Activated B cell treated with CpG ODN at 0.5 μM for 24 hours (primary cell): ENCODE measurements at regions of chr5 and their contacts with region 1.

Region 1: DNA sequence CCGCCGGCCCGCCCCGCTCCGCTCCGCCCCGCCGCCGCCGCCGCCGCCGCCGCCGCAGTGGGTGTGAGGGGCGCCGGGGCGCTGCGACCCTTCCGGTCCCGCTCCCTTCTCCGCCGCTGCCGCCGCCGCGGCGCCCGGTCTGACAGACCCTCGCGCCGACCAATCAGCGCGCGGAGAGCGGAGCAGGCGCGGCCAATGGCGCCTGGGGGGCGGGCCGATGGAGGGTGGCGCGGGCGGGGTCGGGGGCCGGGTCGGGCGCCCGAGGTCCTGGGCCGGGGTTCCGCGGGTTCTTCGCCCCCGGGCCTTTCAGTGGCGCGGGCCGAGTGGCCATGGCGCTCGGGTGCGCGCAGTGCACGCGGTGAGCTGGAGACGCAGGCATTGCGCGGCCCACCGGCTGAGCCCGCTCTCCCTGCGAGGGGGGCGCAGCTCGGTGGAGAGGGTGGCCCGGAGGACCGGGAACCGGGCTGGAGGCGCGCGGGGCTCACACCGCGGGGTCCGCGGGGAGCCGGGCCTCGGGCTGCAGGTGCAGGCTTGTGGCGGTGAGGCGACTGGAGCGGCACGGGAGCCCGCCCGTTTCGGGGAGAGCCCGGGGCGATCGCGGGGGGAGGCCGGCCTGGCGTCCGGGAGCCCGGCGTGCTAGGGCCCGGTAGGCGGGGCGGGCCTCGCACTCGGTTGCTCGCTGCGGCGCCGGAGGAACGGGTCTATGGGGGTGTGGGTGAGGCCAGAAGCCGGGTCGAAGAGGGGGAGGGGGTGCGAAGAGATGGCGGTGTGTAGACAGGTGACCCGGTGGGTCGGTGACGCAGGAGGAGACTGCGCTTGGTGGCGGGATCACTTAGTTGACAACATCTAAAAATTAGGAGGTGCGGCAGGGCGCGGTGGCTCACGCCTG is at the start of gene MAPK9:
- DNase-seq: peak; percentile 87
- ATAC-seq: peak; percentile 78
- H3K4me3 Mint-ChIP-seq: peak within 1 kb of the TSS; percentile 92
- H3K27ac Mint-ChIP-seq: peak within 1 kb of the TSS; percentile 89
- H3K4me1 Mint-ChIP-seq: peaks cover 33% of the 10 kb centered on the region
- H3K27me3 Mint-ChIP-seq: no peaks in the 10 kb centered on the region
- CTCF ChIP-seq: no peak
- total RNA-seq, gene MAPK9: 26.9 and 30.3 TPM in 2 replicates

Region 2: GRCh38 chr5:178626484-178627258 is 1665.5 kb before region 1 on chr5 and contains the start of gene CLK4:
- CTCF ChIA-PET with region 1: no interaction called
- POLR2A ChIA-PET with region 1: no interaction called
- intact Hi-C with region 1: loop called (anchors 5 kb)
- DNase-seq: peak; percentile 97
- ATAC-seq: peak; percentile 85
- H3K4me3 Mint-ChIP-seq: peak within 1 kb of the TSS; percentile 98
- H3K27ac Mint-ChIP-seq: peak within 1 kb of the TSS; percentile 98
- H3K4me1 Mint-ChIP-seq: peaks cover 59% of the 10 kb centered on the region
- H3K27me3 Mint-ChIP-seq: no peaks in the 10 kb centered on the region
- CTCF ChIP-seq: no peak
- total RNA-seq, gene CLK4: 62.4 and 65.3 TPM in 2 replicates

Region 3: GRCh38 chr5:179678223-179679013 is 613.8 kb before region 1 on chr5:
- CTCF ChIA-PET with region 1: no interaction called
- POLR2A ChIA-PET with region 1: no interaction called
- intact Hi-C with region 1: loop called (anchors 5 kb)
- DNase-seq: peak; percentile 91
- ATAC-seq: peak; percentile 91
- H3K4me3 Mint-ChIP-seq: peak overlapping the region; percentile 96
- H3K27ac Mint-ChIP-seq: peak overlapping the region; percentile 94
- H3K4me1 Mint-ChIP-seq: peaks cover 32% of the 10 kb centered on the region
- H3K27me3 Mint-ChIP-seq: no peaks in the 10 kb centered on the region
- CTCF ChIP-seq: no peak

Region 4: GRCh38 chr5:180315762-180316212 is 23.6 kb after region 1 on chr5:
- CTCF ChIA-PET with region 1: interaction called, 82 read pairs
- POLR2A ChIA-PET with region 1: interaction called, 15 read pairs
- intact Hi-C with region 1: loop called (anchors 1 kb)
- DNase-seq: peak; percentile 67
- ATAC-seq: peak; percentile 86
- H3K4me3 Mint-ChIP-seq: no peak overlapping the region
- H3K27ac Mint-ChIP-seq: no peak overlapping the region
- H3K4me1 Mint-ChIP-seq: no peaks in the 10 kb centered on the region
- H3K27me3 Mint-ChIP-seq: peaks cover 4% of the 10 kb centered on the region
- CTCF ChIP-seq: peak; percentile 45

Region 5: DNA sequence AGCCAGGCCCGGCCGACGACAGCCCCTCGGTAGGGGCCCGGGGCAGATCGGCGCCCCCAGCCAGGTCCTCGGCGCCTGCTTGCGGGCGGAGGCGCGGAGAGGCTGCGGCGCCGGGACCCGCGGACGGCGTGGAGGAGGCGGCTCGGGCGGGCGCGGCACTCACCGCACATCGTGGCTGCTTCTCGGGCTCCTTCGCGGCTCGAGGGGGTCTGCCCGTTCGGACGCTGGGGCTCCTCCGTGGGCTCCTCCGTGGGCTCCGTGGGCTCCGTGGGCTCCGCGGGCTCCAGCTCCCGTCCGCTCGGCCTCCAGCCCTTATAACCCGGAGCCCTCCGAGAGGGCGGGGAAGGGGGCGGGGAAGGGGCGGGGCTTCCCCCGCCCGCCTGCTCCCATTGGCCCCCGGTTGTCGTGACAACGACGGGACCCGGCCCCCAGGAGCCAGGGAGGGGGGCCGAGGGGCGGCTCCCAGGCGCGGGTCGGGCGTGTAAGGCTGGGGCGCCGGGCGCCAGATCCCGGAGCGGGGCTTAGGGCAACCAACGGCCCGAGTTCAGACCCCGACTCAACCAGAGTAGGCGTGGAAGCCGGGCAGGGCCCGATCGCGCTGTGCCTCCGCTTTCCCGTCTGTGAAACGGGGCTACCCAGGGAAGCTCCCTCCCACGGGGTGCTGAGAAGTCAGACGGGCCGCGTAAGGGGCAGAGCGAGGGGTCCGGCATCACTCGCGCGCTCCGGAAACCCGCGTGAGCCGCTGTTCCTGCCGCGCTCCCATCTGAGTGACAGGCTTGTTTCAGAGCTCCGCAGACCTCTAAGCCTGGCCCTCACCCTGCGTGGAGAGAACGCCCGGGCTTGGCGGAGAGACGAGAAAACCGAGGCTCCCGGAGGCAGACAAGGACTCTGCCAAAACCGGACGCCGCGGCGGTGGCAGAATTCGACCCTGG is 61.1 kb after region 1 on chr5 and contains the start of gene GFPT2:
- CTCF ChIA-PET with region 1: interaction called, 5 read pairs
- POLR2A ChIA-PET with region 1: interaction called, 3 read pairs
- intact Hi-C with region 1: loop called (anchors 1 kb)
- DNase-seq: peak; percentile 65
- ATAC-seq: peak; percentile 91
- H3K4me3 Mint-ChIP-seq: peak within 1 kb of the TSS; percentile 78
- H3K27ac Mint-ChIP-seq: no peak within 1 kb of the TSS
- H3K4me1 Mint-ChIP-seq: peaks cover 13% of the 10 kb centered on the region
- H3K27me3 Mint-ChIP-seq: peaks cover 50% of the 10 kb centered on the region
- CTCF ChIP-seq: no peak
- total RNA-seq, gene GFPT2: 0.39 and 0.62 TPM in 2 replicates

Region 6: DNA sequence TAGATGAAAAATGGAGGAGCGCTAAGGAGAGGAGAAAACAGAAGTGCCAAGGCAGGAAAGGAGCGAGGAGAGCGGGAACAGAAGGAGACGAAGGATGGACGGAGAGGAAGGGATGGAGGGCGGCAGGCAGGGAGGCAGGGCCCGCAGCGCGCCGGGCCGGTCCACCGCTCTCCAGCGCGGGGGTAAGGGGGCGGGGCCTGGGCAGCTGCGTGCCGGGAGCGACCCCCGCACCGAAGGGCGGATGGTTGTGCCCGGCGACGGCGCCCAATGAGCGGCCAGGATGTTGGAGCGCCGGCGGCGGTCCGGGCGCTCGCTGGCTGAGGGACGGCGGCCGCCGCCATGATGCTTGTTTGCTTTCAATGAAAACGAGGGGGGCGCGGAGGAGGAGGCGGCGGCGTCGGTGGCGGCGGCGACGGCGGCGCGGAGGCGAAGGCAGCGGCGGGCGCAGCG is 201.9 kb after region 1 on chr5 and contains the start of gene CNOT6:
- CTCF ChIA-PET with region 1: no interaction called
- POLR2A ChIA-PET with region 1: interaction called, 3 read pairs
- intact Hi-C with region 1: loop called (anchors 1 kb)
- DNase-seq: peak; percentile 95
- ATAC-seq: peak; percentile 92
- H3K4me3 Mint-ChIP-seq: peak within 1 kb of the TSS; percentile 88
- H3K27ac Mint-ChIP-seq: peak within 1 kb of the TSS; percentile 92
- H3K4me1 Mint-ChIP-seq: peaks cover 32% of the 10 kb centered on the region
- H3K27me3 Mint-ChIP-seq: no peaks in the 10 kb centered on the region
- CTCF ChIP-seq: no peak
- total RNA-seq, gene CNOT6: 24.9 and 25.7 TPM in 2 replicates

Region 7: DNA sequence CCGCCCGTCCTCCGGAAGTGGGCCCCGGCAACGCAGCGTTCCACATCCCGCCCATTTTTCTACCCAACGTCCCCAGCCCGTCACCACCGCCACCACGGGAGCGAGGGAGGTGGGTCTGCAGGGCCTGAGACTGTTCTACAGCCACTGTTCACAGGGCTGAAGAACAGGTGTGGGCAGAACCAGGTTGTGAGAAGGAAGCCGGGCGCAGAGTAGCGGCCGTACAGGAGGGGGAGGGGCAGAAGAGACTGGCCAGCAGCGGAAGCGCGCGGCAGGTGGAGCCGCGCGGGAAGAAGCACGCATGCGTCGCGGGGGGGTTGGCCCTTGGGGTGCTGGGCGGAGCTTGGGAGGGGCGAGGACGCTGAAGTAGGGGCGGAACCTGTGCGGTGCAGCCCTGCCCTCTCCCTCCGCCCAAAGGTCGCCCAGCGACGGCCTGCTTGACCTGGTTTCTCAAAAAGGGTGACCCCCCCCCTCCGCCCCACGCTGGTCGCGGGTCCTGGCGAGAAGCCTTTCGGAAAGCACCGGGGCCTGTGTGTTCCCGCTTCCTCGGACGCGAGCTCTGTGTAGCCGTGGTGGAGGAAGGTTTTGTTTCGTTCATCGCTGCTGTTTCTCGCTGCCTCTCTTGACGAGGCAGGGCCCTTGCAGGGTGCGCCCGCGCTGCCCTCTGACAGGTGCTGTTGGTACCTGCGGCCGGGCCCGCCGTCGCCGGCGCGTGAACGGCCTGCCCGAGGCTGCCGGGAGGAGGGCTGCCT is 518.2 kb after region 1 on chr5:
- CTCF ChIA-PET with region 1: no interaction called
- POLR2A ChIA-PET with region 1: no interaction called
- intact Hi-C with region 1: loop called (anchors 10 kb)
- DNase-seq: peak; percentile 98
- ATAC-seq: peak; percentile 84
- H3K4me3 Mint-ChIP-seq: peak overlapping the region; percentile 98
- H3K27ac Mint-ChIP-seq: peak overlapping the region; percentile 100
- H3K4me1 Mint-ChIP-seq: peaks cover 76% of the 10 kb centered on the region
- H3K27me3 Mint-ChIP-seq: no peaks in the 10 kb centered on the region
- CTCF ChIP-seq: no peak